ENCODE measurements at regions of chr1 and their contacts with region 1.

Region 1: DNA sequence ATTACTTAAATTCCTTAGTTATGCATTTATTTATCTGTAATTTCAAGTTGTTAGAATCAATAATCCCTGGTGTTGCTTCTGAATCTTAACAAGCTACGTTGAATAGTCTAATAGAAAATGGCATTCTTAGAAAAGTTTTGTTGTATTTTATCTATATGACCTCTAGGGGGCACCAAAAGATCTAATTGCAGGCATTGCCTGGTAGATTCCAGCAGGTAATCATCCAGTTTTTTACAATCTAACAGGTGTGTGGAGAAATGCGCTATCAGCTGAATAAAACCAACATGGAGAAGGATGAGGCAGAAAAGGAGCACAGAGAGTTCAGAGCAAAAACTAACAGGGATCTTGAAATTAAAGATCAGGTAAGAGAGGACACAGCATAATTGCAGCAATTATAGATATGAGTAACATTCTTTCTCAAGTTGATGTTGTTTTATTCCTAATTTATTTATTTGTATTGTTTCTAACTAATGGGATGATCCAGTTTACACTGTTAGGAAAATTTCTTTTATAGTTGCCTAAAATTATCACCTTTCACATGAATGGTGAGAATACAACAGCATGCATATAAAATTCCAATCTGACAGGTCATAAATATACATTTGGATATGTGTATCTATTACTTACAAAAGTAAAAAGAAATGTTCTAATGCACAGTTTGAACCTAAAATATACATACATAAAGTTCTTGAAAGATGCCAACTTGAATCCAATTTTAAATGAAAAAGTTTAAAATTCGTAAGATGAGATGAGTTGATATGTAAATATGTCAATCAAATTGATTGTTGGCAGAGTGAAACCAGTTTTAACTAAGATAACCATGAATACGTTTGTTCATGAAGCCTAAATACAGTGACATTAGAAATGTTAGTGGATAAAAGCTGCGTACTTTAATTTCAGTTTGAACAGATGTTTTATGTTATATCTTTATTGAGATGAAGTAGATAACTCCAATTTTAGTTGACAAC is 88.4 kb downstream of the SDCCAG8 start:
- DNase-seq: peak; percentile 47
- CTCF ChIP-seq: peak; percentile 48

Region 2: DNA sequence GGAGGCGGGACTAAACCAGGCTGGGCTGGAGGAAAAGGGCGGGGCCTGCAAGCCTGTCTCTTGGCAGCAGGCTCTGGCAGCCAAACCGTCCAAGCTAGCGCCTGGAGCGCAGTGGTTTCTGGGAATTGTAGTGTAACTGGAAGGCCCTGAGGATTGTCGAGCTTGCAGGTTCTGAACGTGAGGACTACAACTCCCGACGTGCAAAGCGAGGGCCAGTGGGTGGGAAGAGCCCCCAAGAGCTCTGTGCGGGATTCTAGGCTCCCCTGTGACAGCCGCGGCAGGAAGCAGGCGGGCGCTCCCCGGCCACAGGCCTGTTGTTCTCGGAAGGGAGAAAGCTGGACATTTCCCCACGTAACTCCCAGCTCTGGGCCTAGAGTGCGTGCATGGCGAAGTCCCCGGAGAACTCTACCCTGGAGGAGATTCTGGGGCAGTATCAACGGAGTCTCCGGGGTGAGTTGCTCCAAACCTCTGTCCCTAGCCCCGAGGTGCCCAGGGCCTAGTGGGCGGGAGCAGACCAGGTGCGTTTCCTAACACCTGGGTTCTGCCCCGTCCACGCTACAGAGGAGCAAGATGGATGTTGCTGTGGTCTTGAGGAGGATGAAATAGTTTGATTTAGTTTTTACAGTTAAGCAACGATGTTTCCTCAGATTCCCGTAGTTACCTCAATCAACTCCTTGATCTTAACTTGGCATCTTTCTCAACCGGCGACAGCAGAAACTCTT is 88.3 kb before region 1 on chr1 and contains the start of gene SDCCAG8:
- CTCF ChIA-PET with region 1: no interaction called
- POLR2A ChIA-PET with region 1: no interaction called
- DNase-seq: peak; percentile 91
- CTCF ChIP-seq: no peak

Region 3: DNA sequence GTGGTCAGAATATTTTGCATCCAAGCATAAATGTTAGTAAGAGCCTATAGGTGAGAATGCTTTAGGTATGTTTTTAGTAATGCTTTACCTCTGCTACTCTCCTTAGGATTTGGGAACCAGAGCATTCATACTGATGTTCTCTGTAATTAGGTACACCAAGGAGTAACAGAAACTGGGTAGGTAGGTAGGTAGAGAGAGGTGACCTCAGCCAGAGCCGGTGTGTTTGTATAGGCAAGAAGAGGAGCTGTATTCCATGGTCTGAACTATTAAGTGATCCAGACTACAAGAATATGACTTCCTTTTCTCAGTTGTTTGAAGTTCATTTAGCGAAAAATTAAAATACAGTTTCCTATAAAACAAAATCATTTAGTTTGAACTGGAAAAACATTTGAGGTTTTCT is 20.1 kb after region 1 on chr1:
- CTCF ChIA-PET with region 1: interaction called, 11 read pairs
- POLR2A ChIA-PET with region 1: no interaction called
- DNase-seq: no peak
- CTCF ChIP-seq: no peak

Region 4: GRCh38 chr1:243409284-243409683 is 65.0 kb after region 1 on chr1:
- CTCF ChIA-PET with region 1: interaction called, 12 read pairs
- POLR2A ChIA-PET with region 1: no interaction called
- DNase-seq: no peak
- CTCF ChIP-seq: peak; percentile 35

Region 5: DNA sequence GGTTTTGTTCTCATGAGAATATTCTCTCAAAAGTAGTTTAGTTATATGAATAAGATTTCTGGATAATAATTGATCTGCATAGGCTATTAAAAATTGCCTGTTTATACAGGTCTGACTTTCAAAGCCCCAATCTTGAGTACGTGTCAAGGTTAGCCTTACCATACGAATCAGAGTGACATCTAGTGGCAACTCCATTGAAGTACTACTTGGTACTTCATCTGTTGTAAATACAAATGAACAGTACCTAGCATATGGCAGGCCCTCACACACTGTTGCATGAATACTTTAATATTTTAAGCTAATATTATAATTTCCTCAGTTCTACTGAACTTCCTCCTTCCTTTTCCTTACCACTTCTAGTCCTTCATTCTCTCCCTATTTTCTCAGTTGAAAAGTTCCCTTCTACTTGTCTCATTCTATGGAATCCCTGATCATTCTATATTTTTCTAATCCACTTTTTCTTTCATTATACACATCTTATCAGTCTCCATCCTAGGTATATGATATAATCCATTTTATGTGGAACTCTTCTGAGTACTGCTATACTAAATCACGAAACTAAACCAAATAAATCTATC is 404.5 kb after region 1 on chr1:
- CTCF ChIA-PET with region 1: interaction called, 24 read pairs
- POLR2A ChIA-PET with region 1: no interaction called
- DNase-seq: peak; percentile 67
- CTCF ChIP-seq: peak; percentile 60

Region 6: GRCh38 chr1:244272471-244273261 is 928.4 kb after region 1 on chr1:
- CTCF ChIA-PET with region 1: interaction called, 23 read pairs
- POLR2A ChIA-PET with region 1: no interaction called
- DNase-seq: peak; percentile 76
- CTCF ChIP-seq: peak; percentile 97

Measured in GM10248 (cell line).